ENCODE measurements at regions of chr10 and their contacts with region 1.

Region 1: GRCh38 chr10:102420810-102421644 is at the start of gene FBXL15:
- DNase-seq: peak; percentile 98
- total RNA-seq, gene FBXL15: 12.1 TPM

Region 2: GRCh38 chr10:102151774-102152544 is 269.1 kb before region 1 on chr10 and contains the start of gene NOLC1:
- intact Hi-C with region 1: loop called (anchors 5 kb)
- DNase-seq: peak; percentile 99
- total RNA-seq, gene NOLC1: 26.2 TPM

Region 3: GRCh38 chr10:102394079-102394800 is 26.8 kb before region 1 on chr10:
- intact Hi-C with region 1: loop called (anchors 2 kb)
- DNase-seq: peak; percentile 99

Region 4: GRCh38 chr10:102432162-102432950 is 11.3 kb after region 1 on chr10 and contains the start of gene CUEDC2:
- intact Hi-C with region 1: loop called (anchors 1 kb)
- DNase-seq: peak; percentile 99
- total RNA-seq, gene CUEDC2: 62.4 TPM

Region 5: DNA sequence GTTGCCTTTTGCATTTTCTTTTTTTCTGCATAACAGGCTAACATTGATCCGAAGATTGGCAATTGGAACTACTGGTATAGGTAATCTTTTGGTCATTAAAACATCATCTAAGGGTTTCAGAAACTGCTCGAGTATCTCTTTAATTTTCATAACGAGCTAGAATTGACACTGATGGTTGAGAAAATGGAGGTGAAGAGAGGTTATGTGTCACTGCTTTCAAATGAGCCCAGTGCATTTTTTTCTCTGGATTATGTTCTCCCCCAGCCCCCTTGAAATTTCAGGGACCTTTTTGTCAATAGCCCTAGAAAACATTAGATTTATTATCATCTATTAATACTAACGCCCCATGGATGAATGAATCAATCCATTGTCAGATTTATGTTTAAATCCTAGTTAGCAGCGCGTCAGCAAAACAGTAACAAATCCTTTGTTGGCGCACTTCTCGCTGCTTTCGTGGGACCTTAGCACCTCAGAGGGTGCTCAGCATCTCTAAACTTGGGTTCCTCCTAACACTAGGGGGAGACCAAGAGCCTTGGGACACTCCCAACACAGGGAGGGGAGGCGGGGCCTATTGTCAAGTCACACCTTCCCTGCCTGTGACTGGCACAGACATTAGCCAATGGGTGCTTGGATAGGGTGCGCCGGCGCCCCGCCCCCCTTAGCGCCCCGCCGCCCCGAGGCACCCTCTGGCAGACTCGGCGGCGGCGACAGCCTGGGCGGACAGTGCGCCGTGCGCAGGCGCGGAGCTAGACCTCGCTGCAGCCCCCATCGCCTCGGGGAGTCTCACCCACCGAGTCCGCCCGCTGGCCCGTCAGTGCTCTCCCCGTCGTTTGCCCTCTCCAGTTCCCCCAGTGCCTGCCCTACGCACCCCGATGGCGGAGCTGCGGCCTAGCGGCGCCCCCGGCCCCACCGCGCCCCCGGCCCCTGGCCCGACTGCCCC is 82.5 kb after region 1 on chr10 and contains the start of gene SUFU:
- intact Hi-C with region 1: loop called (anchors 5 kb)
- DNase-seq: peak; percentile 99
- total RNA-seq, gene SUFU: 6.1 TPM